Panc1 (cell line): ENCODE measurements at regions of chr11 and their contacts with region 1.

Region 1: DNA sequence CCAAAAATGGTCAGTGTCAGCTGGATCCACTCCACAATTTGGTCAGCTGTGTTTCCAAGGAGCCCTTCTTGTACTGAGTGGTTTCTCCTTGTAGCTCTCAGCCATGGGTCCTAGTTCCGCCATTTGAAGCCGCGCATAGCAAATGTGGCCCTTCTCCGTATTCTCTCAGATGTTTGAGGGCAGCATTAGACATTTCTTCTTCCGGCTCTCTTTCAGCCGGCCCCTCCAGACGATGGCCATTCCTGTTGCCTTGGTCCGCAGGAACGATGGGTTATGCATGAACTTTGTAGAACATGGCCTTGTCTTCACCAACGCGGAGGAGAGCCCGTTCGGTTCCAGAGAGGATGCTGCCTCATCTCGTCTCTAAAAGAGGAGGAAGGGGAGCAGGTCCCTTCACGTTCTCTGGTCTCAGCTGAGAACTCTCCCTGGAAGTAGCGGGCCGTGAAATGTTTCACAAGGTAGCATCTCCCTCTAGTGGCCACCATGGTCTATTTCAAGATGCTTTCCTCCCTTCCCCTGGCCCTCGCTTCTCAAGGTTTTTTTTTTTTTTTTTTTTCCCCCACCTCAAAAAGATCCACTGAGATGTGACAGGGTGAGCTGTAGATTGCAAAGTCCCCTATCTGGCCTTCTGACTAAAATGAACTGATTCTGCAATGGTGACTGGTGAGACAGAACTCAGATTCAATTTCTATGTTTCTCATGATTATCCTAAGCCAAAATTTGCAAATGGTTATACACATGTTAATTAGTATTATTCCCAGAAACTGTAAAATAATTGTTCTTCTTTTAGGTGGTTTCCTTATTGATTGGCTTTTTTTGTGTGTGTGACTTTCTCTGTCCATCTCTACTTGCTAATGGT is 19.8 kb upstream of the PLET1 start:
- DNase-seq: peak; percentile 61
- ATAC-seq: peak; percentile 91
- H3K4me3 ChIP-seq: peak overlapping the region; percentile 45 to 67
- H3K27ac ChIP-seq: no peak overlapping the region
- H3K4me1 ChIP-seq: peaks cover 4% of the 10 kb centered on the region; the same call in 1 of the 2 replicates
- H3K27me3 ChIP-seq: peaks cover 2% of the 10 kb centered on the region
- CTCF ChIP-seq: peak; percentile 81

Region 2: GRCh38 chr11:111860257-111860656 is 420.2 kb before region 1 on chr11:
- CTCF ChIA-PET with region 1: no interaction called
- POLR2A ChIA-PET with region 1: no interaction called
- in situ Hi-C with region 1: no loop called
- intact Hi-C with region 1: no loop called
- DNase-seq: no peak
- ATAC-seq: no peak
- H3K4me3 ChIP-seq: no peak overlapping the region
- H3K27ac ChIP-seq: no peak overlapping the region
- H3K4me1 ChIP-seq: no peaks in the 10 kb centered on the region
- H3K27me3 ChIP-seq: no peaks in the 10 kb centered on the region
- CTCF ChIP-seq: no peak

Region 3: DNA sequence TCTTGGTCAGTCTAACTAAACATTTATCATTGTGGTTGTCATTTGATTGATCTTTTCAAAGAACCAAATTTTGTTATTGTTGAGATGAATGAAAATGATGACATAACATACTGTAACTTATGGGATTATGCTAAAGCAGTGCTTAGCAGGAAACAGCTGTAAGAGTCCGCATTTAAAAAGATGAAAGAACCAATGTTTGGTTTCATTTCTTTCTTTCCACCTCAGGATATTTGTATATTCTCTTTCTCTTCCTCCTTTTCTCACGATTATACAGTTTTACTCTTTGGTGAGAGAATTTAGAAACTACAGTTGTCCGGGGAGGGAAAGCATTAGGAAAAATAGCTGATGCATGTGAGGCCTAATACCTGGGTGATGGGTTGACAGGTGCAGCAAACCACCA is 229.8 kb before region 1 on chr11:
- CTCF ChIA-PET with region 1: interaction called, 12 read pairs
- POLR2A ChIA-PET with region 1: no interaction called
- in situ Hi-C with region 1: no loop called
- intact Hi-C with region 1: no loop called
- DNase-seq: no peak
- ATAC-seq: no peak
- H3K4me3 ChIP-seq: no peak overlapping the region
- H3K27ac ChIP-seq: no peak overlapping the region
- H3K4me1 ChIP-seq: no peaks in the 10 kb centered on the region
- H3K27me3 ChIP-seq: no peaks in the 10 kb centered on the region
- CTCF ChIP-seq: no peak

Region 4: GRCh38 chr11:112113539-112114457 is 166.7 kb before region 1 on chr11:
- CTCF ChIA-PET with region 1: interaction called, 7 read pairs
- POLR2A ChIA-PET with region 1: no interaction called
- in situ Hi-C with region 1: no loop called
- intact Hi-C with region 1: loop called (anchors 2 kb)
- DNase-seq: no peak
- ATAC-seq: peak; percentile 87
- H3K4me3 ChIP-seq: no peak overlapping the region
- H3K27ac ChIP-seq: peak overlapping the region; percentile 24; the same call in 1 of the 2 replicates
- H3K4me1 ChIP-seq: no peaks in the 10 kb centered on the region
- H3K27me3 ChIP-seq: no peaks in the 10 kb centered on the region
- CTCF ChIP-seq: peak; percentile 71; the same call in 1 of the 2 replicates

Region 5: DNA sequence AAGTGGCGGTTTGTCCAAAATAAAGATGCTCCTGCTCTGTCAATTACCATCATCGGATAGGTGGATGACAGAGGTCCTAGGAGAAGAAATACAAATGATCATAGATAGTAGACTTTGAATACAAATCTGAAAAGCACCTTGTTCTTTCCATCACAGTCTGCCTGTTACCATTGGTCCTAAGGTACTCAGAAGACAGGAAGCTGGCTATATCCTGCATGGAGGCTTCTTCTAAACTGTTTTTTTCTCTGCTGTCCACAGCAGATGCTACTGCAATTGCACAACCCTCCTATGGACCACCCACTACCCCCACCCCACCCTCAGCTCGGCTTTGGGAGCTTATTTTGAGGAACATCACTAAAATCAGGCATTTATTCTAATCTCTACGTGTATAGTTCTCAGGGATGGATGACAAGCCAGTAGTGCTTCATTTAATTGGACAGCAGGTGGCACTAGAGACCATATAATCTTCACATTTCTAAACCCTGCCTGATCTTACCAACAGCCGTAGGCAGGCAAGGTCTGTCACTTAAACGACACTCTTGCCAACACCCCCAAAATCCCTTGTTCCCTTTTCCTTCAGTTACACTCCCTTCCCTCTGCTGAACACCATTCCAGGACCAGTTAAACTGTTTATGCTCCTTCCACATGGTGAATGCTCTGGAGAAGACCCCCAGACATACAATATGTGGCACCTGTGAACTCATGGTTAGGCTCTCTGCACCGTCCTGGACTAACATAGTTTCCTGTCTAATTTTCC is 60.8 kb before region 1 on chr11:
- CTCF ChIA-PET with region 1: interaction called, 58 read pairs
- POLR2A ChIA-PET with region 1: no interaction called
- in situ Hi-C with region 1: no loop called
- intact Hi-C with region 1: loop called (anchors 1 kb)
- DNase-seq: peak; percentile 78
- ATAC-seq: peak; percentile 98
- H3K4me3 ChIP-seq: no peak overlapping the region
- H3K27ac ChIP-seq: no peak overlapping the region
- H3K4me1 ChIP-seq: 0 out of 2 replicates have a peak, but pooled peaks cover 4% of the 10 kb centered on the region
- H3K27me3 ChIP-seq: no peaks in the 10 kb centered on the region
- CTCF ChIP-seq: peak; percentile 88

Region 6: GRCh38 chr11:112235750-112236390 is 44.6 kb before region 1 on chr11:
- CTCF ChIA-PET with region 1: no interaction called
- POLR2A ChIA-PET with region 1: no interaction called
- in situ Hi-C with region 1: no loop called
- intact Hi-C with region 1: no loop called
- DNase-seq: no peak
- ATAC-seq: no peak
- H3K4me3 ChIP-seq: no peak overlapping the region
- H3K27ac ChIP-seq: no peak overlapping the region
- H3K4me1 ChIP-seq: peaks cover 3% of the 10 kb centered on the region
- H3K27me3 ChIP-seq: no peaks in the 10 kb centered on the region
- CTCF ChIP-seq: no peak

Region 7: DNA sequence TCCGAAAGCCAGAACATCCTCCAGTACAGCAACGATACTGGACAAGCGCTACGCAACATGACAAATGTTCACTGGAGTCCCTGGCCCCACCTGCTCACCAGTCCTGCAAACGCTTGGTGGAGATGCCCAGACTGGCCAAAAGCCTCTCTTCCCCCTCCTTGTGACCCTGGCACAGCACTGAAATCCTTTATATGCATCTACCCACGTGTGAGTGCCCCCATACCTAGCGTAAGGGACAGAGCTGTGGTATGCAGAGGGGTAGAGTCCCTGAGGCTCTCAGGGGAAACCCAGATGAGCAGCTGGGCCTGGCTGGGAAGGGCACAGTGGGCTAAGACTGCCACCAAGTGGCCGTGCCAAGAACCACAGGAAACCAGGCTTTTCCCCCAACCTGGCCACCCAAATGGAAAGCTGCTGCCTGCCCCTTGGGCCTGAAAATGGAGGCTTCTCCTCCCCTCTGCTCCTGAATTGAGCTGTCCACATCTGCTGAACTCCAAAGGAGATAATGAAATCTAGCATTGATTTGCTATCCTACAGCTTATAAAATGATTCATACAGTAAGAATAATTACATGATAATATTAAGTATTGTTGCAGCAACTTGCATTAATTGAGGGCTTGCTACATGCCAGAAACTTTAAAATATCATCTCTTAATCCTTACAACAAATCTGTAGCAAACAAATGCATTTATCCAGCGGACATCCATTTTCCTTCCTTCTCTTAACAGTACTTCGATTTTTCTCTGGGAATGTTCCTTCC is 1009.1 kb after region 1 on chr11:
- CTCF ChIA-PET with region 1: no interaction called
- POLR2A ChIA-PET with region 1: no interaction called
- in situ Hi-C with region 1: no loop called
- intact Hi-C with region 1: loop called (anchors 5 kb)
- DNase-seq: peak; percentile 53
- ATAC-seq: peak; percentile 89
- H3K4me3 ChIP-seq: no peak overlapping the region
- H3K27ac ChIP-seq: no peak overlapping the region
- H3K4me1 ChIP-seq: no peaks in the 10 kb centered on the region
- H3K27me3 ChIP-seq: no peaks in the 10 kb centered on the region; the same call in 1 of the 2 replicates
- CTCF ChIP-seq: peak; percentile 96